ENCODE measurements at regions of chr11 and their contacts with region 1.

Region 1: DNA sequence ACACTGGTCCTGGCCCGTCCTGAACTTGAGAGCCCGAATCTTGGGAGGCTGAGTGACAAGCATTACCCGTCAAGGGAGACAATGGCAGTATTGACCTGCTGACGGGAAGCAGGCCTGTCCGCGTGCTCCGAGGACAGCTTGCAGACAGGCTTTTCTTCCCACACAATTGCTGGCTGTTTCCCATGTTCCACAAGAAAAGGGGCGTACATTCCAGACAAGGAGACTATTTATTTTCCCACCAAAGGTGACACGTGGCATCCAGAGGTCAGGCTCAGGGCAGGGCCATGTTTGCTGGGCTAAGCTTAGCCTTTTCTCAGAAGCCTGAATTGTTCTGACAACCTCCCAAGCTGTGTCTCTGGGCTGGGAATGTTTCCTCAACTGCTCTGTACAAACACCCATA is 86.9 kb upstream of the SPON1 start:
- DNase-seq: no peak
- H3K4me3 ChIP-seq: no peak overlapping the region
- H3K27ac ChIP-seq: no peak overlapping the region
- H3K4me1 ChIP-seq: no peaks in the 10 kb centered on the region
- H3K27me3 ChIP-seq: no peaks in the 10 kb centered on the region
- CTCF ChIP-seq: no peak
- POLR2A ChIP-seq: no peak

Region 2: GRCh38 chr11:13475101-13475500 is 400.5 kb before region 1 on chr11:
- intact Hi-C with region 1: loop called (anchors 5 kb)
- DNase-seq: no peak
- H3K4me3 ChIP-seq: no peak overlapping the region
- H3K27ac ChIP-seq: no peak overlapping the region
- H3K4me1 ChIP-seq: no peaks in the 10 kb centered on the region
- H3K27me3 ChIP-seq: no peaks in the 10 kb centered on the region
- CTCF ChIP-seq: no peak
- POLR2A ChIP-seq: no peak

Region 3: GRCh38 chr11:13939952-13940610 is 64.4 kb after region 1 on chr11:
- intact Hi-C with region 1: loop called (anchors 2 kb)
- DNase-seq: no peak
- H3K4me3 ChIP-seq: no peak overlapping the region
- H3K27ac ChIP-seq: no peak overlapping the region
- H3K4me1 ChIP-seq: no peaks in the 10 kb centered on the region
- H3K27me3 ChIP-seq: no peaks in the 10 kb centered on the region
- CTCF ChIP-seq: no peak
- POLR2A ChIP-seq: no peak